ENCODE measurements at regions of chr11 and their contacts with region 1.

Region 1: GRCh38 chr11:72831513-72832300 is 17.5 kb downstream of the ATG16L2 start:
- DNase-seq: peak; percentile 90
- H3K4me3 ChIP-seq: no peak overlapping the region
- H3K27ac ChIP-seq: no peak overlapping the region
- H3K4me1 ChIP-seq: no peaks in the 10 kb centered on the region
- H3K27me3 ChIP-seq: no peaks in the 10 kb centered on the region
- CTCF ChIP-seq: peak; percentile 97

Region 2: GRCh38 chr11:73242251-73243079 is 410.8 kb after region 1 on chr11:
- CTCF ChIA-PET with region 1: no interaction called
- POLR2A ChIA-PET with region 1: no interaction called
- intact Hi-C with region 1: loop called (anchors 2 kb)
- DNase-seq: peak; percentile 82
- H3K4me3 ChIP-seq: peak overlapping the region; percentile 18
- H3K27ac ChIP-seq: no peak overlapping the region
- H3K4me1 ChIP-seq: no peaks in the 10 kb centered on the region
- H3K27me3 ChIP-seq: no peaks in the 10 kb centered on the region
- CTCF ChIP-seq: peak; percentile 99